ENCODE measurements at regions of chr5 and their contacts with region 1.

Region 1: DNA sequence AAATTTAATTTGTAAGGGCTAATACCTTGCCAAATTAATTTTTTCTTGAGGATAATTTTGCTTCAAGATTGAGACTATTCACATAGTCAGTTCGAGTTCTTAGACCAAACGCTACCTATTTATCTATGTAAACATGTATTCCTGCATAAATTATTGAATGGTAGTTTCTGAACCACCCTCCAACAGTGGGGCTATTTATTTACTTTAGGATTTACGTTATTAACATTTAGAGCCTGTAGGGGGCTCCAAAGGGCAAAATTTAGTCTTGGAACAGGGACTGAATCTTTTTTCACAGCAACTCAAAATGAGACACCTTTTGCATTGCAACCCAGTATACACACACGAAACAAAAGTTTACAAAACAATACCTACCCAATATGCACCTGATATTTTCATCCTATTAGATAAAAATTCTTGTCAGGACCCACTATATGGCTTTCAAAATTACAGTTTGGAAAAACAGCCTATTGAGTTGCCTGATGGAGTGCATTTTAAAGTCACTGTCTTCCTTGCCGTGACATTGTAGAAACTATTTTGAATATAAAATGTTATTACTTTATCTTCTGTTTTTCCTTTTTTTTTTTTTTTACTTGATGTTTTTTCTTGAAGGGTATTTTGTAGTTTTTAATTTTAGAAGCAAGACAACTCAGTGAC is 47.1 kb upstream of the POU4F3 start:
- DNase-seq: no peak
- H3K4me3 ChIP-seq: no peak overlapping the region
- H3K27ac ChIP-seq: no peak overlapping the region
- H3K4me1 ChIP-seq: no peaks in the 10 kb centered on the region
- H3K27me3 ChIP-seq: no peaks in the 10 kb centered on the region
- CTCF ChIP-seq: peak in 1 of 3 donors; percentile 14
- EP300 ChIP-seq: no peak
- POLR2A ChIP-seq: no peak

Region 2: GRCh38 chr5:144403817-144404420 is 1887.6 kb before region 1 on chr5:
- intact Hi-C with region 1: loop called in 1 of 4 experiments (anchors 5 kb)
- DNase-seq: no peak
- H3K4me3 ChIP-seq: no peak overlapping the region
- H3K27ac ChIP-seq: no peak overlapping the region
- H3K4me1 ChIP-seq: no peaks in the 10 kb centered on the region
- H3K27me3 ChIP-seq: no peaks in the 10 kb centered on the region
- CTCF ChIP-seq: no peak
- EP300 ChIP-seq: no peak
- POLR2A ChIP-seq: no peak

Region 3: DNA sequence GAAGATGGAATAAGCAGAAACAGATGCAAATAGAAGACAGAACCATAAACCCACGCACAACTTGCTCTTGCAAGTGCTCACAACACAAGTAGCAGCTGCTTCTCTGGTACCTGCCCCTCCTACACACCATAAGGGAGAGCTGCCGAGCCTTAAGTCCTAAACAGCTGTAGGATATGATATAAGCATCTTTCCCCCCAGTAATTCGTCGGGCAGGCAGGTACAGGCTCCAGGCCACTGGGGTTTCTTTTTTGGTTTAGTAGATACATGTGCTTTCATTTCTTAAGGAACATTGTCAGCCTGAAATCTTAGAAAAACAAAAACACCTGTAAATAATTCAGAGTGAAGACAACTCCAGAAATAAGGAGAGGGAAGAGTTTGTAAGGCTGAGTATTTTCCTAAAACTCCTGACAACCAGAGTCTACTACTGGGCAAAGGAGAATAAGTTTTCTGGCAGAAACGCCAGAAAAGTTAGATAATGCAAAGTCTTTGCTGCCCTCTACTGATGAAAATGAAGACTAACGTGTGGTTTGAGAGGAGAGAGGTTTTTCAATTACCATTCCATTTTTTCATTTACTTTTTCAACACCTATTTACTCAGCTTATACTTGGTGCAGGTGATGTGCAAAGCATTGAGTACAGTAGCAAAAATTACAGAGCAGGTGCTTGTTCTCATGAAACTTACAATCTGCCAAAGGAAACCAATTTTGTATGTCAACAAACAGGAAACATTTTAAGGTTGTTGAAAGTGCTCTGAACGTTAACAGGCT is 135.5 kb after region 1 on chr5:
- intact Hi-C with region 1: loop called in 1 of 4 experiments (anchors 10 kb)
- DNase-seq: no peak
- H3K4me3 ChIP-seq: no peak overlapping the region
- H3K27ac ChIP-seq: no peak overlapping the region
- H3K4me1 ChIP-seq: no peaks in the 10 kb centered on the region
- H3K27me3 ChIP-seq: no peaks in the 10 kb centered on the region
- CTCF ChIP-seq: peak; percentile 18 to 42 (median 27)
- EP300 ChIP-seq: no peak
- POLR2A ChIP-seq: no peak